ENCODE measurements at regions of chr11 and their contacts with region 1.

Region 1: DNA sequence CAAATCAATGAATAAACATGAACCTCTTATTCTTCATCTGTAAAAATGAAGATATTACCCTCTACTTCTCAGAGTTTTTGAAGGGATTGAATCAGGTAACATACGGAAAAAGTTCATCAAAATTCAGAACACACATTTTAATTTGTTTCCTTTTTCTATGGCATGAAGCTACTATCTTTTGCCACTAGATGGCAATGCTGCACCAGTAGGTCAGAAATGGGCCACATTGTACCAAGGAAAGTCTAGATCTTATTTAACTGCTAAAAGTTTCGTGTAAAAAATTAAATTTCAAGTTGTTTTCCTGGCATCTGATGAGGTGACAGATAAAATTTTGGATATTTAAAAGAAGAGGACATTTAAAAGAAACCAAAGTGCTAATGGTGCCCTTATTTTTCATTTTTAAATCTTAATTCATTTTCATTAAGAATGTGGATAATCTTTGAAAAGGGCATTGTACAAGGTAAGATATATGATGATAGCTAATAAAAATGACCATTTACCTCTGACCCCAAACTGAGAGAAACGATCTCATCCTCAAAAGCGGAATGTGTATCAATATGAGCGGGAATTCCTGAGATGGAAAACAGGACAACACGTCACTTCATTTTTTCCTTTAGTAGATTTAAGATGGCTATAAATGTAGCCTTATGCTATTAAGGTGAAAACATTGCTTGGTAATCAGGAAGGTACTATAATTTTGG is 16.1 kb downstream of the ALKBH8 start:
- DNase-seq: no peak
- H3K4me3 ChIP-seq: no peak overlapping the region
- H3K27ac ChIP-seq: no peak overlapping the region
- H3K27me3 ChIP-seq: no peaks in the 10 kb centered on the region
- CTCF ChIP-seq: peak; percentile 93

Region 2: DNA sequence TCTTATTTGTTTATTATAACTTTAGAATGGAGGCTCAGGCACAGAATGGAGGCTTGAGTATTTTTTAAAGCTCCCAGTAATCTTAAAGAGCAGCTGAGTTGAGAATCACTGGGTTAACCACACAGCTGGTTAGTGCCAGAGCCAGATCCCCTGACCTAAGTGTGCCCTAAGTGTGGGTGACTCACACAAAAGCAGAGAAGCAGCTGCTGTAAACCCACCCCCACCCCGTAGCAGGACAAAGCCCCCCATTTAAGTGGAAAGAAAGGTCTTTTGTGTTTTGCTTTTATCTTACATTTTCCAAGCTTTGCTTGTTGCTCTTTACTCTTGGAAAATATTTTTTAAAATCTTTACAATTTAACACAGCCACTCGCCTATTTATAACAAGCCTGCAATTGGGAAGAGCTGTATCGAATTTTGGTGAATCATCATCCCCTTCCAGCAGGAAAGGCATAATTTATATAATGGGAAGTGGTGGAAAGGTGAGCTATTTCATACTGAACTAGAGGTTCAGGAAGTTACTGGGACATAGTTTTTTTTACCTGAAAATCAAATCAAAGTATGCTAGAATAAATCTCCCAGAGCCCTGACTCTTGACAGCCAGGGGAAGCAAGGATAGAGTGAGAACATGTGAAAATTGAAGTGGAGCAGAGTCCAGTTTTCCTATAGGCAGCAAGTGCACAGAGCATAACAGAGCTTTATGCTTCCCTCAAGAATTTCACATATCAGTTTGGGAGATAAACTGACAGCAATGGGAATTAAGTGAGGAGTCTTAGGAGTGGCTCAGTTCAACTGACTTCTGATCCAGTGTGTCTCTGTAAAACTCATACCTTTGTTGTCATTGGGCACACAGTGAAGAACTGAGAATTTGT is 1066.3 kb before region 1 on chr11:
- CTCF ChIA-PET with region 1: no interaction called
- POLR2A ChIA-PET with region 1: no interaction called
- DNase-seq: peak; percentile 49
- H3K4me3 ChIP-seq: no peak overlapping the region
- H3K27ac ChIP-seq: peak overlapping the region; percentile 67
- H3K27me3 ChIP-seq: no peaks in the 10 kb centered on the region
- CTCF ChIP-seq: no peak

Region 3: DNA sequence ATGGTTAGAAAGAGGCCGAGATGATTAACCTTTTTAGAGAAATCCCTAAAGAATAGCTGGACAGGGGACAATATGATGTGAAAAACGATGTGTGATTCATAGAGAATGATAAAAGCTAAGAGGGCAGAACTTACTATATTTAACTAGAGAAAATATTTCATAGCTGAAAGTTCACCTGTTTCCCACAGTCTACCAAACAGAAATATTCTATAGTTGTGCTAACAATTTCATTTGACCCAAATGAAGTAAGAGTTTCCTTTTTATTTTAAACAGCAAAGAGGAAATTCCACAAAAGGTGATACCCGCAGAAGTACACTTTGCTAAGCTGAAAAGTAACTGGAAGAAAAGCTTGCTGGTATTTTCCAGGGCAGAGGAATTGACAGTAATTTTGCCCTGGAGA is 10.6 kb before region 1 on chr11:
- CTCF ChIA-PET with region 1: interaction called, 22 read pairs
- POLR2A ChIA-PET with region 1: interaction called, 3 read pairs
- DNase-seq: no peak
- H3K4me3 ChIP-seq: no peak overlapping the region
- H3K27ac ChIP-seq: no peak overlapping the region
- H3K27me3 ChIP-seq: no peaks in the 10 kb centered on the region
- CTCF ChIP-seq: no peak

Region 4: DNA sequence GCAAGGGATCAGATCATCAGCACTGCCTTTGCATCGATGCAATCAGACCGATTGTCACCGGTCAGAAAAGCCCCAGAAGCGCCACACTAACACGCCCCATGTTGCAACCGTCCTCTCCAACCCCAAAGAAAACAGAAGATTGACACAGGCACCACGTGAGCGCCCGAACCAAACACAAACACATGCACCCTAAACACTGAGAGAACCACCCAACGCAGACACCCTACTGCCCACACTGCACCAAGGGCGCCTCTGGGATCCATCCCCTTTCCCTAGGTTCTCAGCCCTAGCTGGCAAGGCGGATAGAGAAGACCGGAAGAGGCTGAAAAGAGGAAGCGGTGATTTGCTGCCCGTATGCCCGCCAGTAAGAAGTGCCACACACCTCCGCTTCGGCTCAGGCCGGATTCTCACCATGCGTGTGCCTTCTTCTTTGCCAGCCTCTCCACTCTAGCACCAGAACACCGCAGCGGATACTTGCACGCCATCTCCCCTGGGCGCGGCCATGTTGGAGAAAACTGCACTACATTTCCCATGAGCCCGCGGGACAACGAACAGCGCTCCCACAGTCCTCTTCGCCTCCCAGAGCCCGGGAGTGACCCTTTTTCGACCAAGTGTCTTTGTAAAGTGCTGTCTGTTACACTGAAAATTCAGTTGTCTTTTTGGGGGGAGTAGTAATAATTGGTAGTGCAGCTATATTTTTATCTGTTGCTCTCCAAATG is 16.0 kb after region 1 on chr11 and contains the start of gene ALKBH8:
- CTCF ChIA-PET with region 1: interaction called, 95 read pairs
- POLR2A ChIA-PET with region 1: no interaction called
- DNase-seq: no peak
- H3K4me3 ChIP-seq: peak within 1 kb of the TSS; percentile 96
- H3K27ac ChIP-seq: peak within 1 kb of the TSS; percentile 66
- H3K27me3 ChIP-seq: peaks cover 3% of the 10 kb centered on the region
- CTCF ChIP-seq: no peak
- polyA plus RNA-seq, gene ALKBH8: 4.8 and 7.3 TPM in 2 replicates

Measured in AG04450 (cell line).